ENCODE measurements at regions of chr2 and their contacts with region 1.

Region 1: GRCh38 chr2:218301176-218301819 is 9.0 kb upstream of the TMBIM1 start:
- DNase-seq: peak; percentile 87 to 88
- ATAC-seq: peak; percentile 87
- H3K4me3 ChIP-seq: no peak overlapping the region
- H3K27ac ChIP-seq: no peak overlapping the region
- H3K4me1 ChIP-seq: peaks cover 0 to 2% of the 10 kb centered on the region in 2 donors
- H3K27me3 ChIP-seq: no peaks in the 10 kb centered on the region

Region 2: DNA sequence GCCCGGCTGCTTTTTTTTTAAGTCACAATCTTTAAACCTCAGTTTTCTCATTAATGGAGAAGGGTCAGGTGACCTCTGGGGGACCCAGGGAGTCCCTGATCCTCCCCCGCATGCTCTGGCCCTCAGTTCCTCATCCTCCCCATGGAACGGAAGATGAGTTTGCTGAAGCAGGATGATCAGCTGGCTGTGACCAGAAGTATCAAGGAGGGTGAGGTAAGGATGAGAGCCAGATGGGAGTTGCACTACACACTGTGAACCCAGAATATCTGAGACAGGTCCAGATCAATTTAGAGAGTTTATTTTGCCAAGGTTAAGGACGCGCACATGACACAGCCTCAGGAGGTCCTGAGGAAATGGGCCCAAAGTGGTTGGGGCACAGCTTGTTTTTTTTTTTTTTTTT is 59.1 kb after region 1 on chr2:
- intact Hi-C with region 1: loop called (anchors 1 to 2 kb)
- DNase-seq: peak in 1 of 2 donors; percentile 70
- ATAC-seq: no peak
- H3K4me3 ChIP-seq: no peak overlapping the region
- H3K27ac ChIP-seq: no peak overlapping the region
- H3K4me1 ChIP-seq: no peaks in the 10 kb centered on the region
- H3K27me3 ChIP-seq: no peaks in the 10 kb centered on the region

Region 3: GRCh38 chr2:218582076-218582475 is 280.8 kb after region 1 on chr2:
- intact Hi-C with region 1: no loop called
- DNase-seq: no peak
- ATAC-seq: no peak
- H3K4me3 ChIP-seq: no peak overlapping the region
- H3K27ac ChIP-seq: no peak overlapping the region
- H3K4me1 ChIP-seq: no peaks in the 10 kb centered on the region
- H3K27me3 ChIP-seq: no peaks in the 10 kb centered on the region

Measured in aorta (tissue), 5 donors.